ENCODE measurements at regions of chr9 and their contacts with region 1.

Region 1: DNA sequence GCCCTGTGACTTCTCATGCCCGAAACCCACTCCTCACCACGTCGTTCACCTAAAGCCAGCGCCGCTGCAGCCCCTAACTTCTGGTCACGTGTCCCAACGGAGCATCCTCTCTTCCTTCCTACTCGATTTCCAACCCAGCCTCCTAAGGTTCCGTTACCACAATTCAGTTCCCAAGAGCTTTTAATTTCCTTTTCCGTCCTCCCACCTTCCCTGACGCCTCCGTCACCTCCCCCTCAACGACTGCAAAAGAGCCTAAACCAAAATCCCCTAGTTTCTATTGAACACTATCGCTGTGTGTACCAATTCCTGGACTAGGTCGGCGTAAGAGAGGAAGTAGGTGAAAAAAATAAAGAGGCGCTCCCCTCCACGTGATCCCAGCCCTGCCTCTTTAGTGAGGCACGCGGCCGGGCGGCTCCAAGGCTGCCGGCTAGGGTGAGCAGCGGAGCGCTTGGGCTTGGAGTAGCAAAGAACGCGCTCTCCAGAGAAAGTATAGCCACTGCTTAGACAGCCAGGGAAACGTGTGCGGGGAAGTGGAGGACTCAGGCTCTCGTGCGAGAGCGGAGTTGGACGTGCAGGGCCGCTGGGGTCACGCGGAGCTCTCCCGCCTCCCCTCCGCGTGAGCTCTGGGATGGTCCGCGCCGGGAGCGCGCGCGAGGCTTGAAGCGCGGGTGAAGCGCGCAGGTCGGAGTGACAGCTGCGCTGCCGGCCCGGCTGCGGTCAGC is at the starts of genes CENPP and NOL8:
- DNase-seq: peak; percentile 88
- CTCF ChIP-seq: no peak

Region 2: DNA sequence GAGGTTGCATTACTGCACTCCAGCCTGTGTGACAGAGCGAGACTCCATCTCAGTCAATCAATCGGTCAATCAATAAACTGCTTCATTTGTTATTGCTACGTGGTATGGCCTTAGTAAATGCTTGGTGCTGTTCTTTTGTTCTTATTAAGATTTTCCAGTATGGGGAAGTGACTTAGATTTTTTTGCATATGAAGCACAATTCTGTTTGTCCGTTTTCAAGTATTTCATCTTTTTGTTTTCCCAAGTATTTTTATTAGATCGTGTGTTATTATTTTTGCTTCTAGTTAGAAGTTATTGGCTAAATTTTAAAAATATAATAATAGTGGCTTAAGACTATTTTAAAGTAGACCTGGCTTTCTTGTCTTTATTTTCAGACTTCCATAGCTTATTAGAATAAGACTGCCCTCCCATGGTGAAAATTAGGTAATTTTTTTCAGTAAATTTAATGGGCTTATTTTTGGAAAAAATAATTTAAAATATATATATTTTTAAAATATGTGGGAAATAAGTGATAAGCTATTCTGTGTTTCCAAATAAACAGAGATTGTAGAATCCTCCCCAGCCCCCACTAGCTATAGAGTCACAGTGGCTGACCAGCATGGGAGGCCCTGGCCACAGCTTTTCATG is 113.6 kb after region 1 on chr9:
- in situ Hi-C with region 1: loop called (anchors 25 kb)
- DNase-seq: no peak
- CTCF ChIP-seq: no peak

Region 3: GRCh38 chr9:92634712-92635605 is 309.5 kb after region 1 on chr9:
- in situ Hi-C with region 1: loop called (anchors 25 kb)
- DNase-seq: peak; percentile 86
- CTCF ChIP-seq: peak; percentile 93

Measured in GM13977 (cell line).